ENCODE measurements at regions of chr18 and their contacts with region 1.

Region 1: GRCh38 chr18:47748847-47749599 is 181.4 kb downstream of the SMAD2 start:
- DNase-seq: peak; percentile 71 to 92 (median 80)
- ATAC-seq: peak; percentile 85 to 96 (median 90)
- H3K4me3 ChIP-seq: peak overlapping the region in 9 of 12 donors; percentile 34 to 54 (median 45)
- H3K27ac ChIP-seq: no peak overlapping the region
- H3K4me1 ChIP-seq: peaks cover 0 to 6% (median 0%) of the 10 kb centered on the region in 12 donors
- H3K27me3 ChIP-seq: peaks cover 0 to 17% (median 3%) of the 10 kb centered on the region in 9 donors
- CTCF ChIP-seq: peak; percentile 93 to 100 (median 100)
- POLR2A ChIP-seq: no peak

Region 2: GRCh38 chr18:47050468-47050867 is 698.6 kb before region 1 on chr18:
- intact Hi-C with region 1: loop called in 3 of 10 experiments (anchors 2 to 5 kb)
- DNase-seq: peak in 1 of 5 donors; percentile 23
- ATAC-seq: no peak
- H3K4me3 ChIP-seq: no peak overlapping the region
- H3K27ac ChIP-seq: no peak overlapping the region
- H3K4me1 ChIP-seq: peaks cover 0 to 3% (median 0%) of the 10 kb centered on the region in 12 donors
- H3K27me3 ChIP-seq: no peaks in the 10 kb centered on the region
- CTCF ChIP-seq: peak; percentile 37 to 71 (median 58)
- POLR2A ChIP-seq: no peak

Region 3: DNA sequence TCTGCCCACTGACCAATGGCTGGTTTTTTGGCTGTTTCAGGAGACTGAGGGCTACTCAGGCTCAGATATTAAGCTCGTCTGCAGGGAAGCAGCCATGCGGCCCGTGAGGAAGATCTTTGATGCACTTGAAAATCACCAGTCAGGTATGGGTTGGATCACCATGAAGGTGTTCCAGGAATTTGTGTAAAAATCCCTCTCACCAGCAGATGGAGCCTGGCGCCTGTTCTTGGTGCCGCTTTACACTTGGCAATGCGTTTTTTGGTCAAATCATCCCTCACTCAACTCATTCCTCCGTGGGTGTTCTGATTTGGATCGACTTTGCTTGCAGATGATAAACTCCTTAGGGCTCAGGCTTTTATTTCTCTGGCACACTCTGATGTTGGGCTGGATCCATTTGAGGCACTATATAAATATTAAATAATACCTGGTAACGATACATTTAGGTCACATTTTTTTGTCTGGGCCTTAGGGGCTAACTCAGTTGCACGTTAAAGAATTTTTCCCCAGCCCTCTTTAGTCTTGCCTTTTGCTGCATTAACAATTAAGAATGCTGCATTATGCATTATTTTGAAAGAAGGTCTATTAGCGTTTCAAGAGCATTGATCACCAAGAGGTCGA is 648.7 kb before region 1 on chr18:
- intact Hi-C with region 1: loop called (anchors 2 to 10 kb)
- DNase-seq: peak in 3 of 5 donors; percentile 20 to 31 (median 25)
- ATAC-seq: peak in 3 of 4 donors; percentile 47 to 79 (median 59)
- H3K4me3 ChIP-seq: no peak overlapping the region
- H3K27ac ChIP-seq: no peak overlapping the region
- H3K4me1 ChIP-seq: peaks cover 0 to 5% (median 0%) of the 10 kb centered on the region in 12 donors
- H3K27me3 ChIP-seq: no peaks in the 10 kb centered on the region
- CTCF ChIP-seq: peak; percentile 64 to 84 (median 72)
- POLR2A ChIP-seq: no peak

Region 4: DNA sequence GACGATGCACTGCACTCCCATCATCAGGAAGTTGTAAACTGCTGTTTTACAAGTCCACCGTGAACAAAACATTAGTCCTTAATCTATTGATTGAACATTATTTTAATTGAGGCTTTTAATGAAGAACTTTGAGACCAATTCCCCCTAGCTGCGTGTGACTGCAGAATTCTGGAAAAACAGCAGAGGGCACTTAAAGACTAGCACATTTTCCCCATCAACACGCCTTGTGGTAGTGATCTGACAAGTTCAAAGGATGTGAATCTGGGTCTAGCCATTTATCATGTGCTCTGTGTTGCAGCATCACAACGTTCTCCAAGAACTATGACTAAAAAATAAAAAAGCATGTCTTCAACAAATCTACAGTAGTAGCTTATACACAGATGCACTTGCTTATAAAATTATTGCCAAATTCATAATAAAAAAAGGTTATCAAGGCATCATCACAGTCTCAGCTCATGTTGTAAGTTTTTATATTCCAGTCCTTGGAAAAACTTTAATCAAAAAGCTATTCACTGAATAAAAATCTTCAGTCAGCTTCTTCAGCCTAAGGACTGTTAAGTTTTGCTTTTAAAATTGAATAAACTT is 533.4 kb before region 1 on chr18:
- intact Hi-C with region 1: loop called (anchors 1 to 2 kb)
- DNase-seq: no peak
- ATAC-seq: peak in 3 of 4 donors; percentile 51 to 63 (median 57)
- H3K4me3 ChIP-seq: no peak overlapping the region
- H3K27ac ChIP-seq: no peak overlapping the region
- H3K4me1 ChIP-seq: no peaks in the 10 kb centered on the region
- H3K27me3 ChIP-seq: peaks cover 0 to 73% (median 10%) of the 10 kb centered on the region in 9 donors
- CTCF ChIP-seq: peak in 11 of 12 donors; percentile 26 to 64 (median 54)
- POLR2A ChIP-seq: no peak

Region 5: GRCh38 chr18:47343291-47343690 is 405.7 kb before region 1 on chr18:
- intact Hi-C with region 1: loop called in 2 of 10 experiments (anchors 10 kb)
- DNase-seq: no peak
- ATAC-seq: no peak
- H3K4me3 ChIP-seq: no peak overlapping the region
- H3K27ac ChIP-seq: no peak overlapping the region
- H3K4me1 ChIP-seq: no peaks in the 10 kb centered on the region
- H3K27me3 ChIP-seq: no peaks in the 10 kb centered on the region
- CTCF ChIP-seq: no peak
- POLR2A ChIP-seq: no peak

Region 6: GRCh38 chr18:47595815-47596496 is 153.1 kb before region 1 on chr18:
- intact Hi-C with region 1: loop called in 1 of 10 experiments (anchors 2 kb)
- DNase-seq: no peak
- ATAC-seq: no peak
- H3K4me3 ChIP-seq: no peak overlapping the region
- H3K27ac ChIP-seq: no peak overlapping the region
- H3K4me1 ChIP-seq: no peaks in the 10 kb centered on the region
- H3K27me3 ChIP-seq: peaks cover 0 to 47% (median 14%) of the 10 kb centered on the region in 9 donors
- CTCF ChIP-seq: peak in 7 of 12 donors; percentile 6 to 32 (median 17)
- POLR2A ChIP-seq: no peak

Region 7: GRCh38 chr18:47606526-47606925 is 142.5 kb before region 1 on chr18:
- intact Hi-C with region 1: no loop called
- DNase-seq: no peak
- ATAC-seq: no peak
- H3K4me3 ChIP-seq: no peak overlapping the region
- H3K27ac ChIP-seq: no peak overlapping the region
- H3K4me1 ChIP-seq: no peaks in the 10 kb centered on the region
- H3K27me3 ChIP-seq: no peaks in the 10 kb centered on the region
- CTCF ChIP-seq: no peak
- POLR2A ChIP-seq: no peak

Region 8: DNA sequence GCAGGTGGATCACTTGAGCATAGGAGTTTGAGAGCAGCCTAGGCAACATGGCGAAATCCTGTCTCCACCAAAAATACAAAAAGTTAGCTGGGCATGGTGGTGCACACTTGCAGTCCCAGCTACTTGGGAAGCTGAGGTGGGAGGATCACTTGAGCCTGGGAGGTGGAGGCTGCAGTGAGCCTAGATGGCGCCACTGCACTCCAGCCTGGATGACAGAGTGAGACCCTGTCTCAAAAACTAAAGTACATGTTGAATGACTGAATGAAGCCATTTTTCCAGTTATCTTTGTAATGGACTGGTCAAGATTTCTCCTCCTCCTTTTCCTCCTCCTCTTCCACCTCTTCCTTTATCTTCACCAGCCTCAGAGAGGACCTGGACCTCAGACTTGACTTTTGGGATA is 90.5 kb before region 1 on chr18:
- intact Hi-C with region 1: no loop called
- DNase-seq: no peak
- ATAC-seq: no peak
- H3K4me3 ChIP-seq: no peak overlapping the region
- H3K27ac ChIP-seq: no peak overlapping the region
- H3K4me1 ChIP-seq: no peaks in the 10 kb centered on the region
- H3K27me3 ChIP-seq: no peaks in the 10 kb centered on the region
- CTCF ChIP-seq: no peak
- POLR2A ChIP-seq: no peak

Region 9: GRCh38 chr18:48922801-48923730 is 1174.0 kb after region 1 on chr18:
- intact Hi-C with region 1: no loop called
- DNase-seq: peak in 4 of 5 donors; percentile 60 to 78 (median 70)
- ATAC-seq: peak; percentile 55 to 71 (median 60)
- H3K4me3 ChIP-seq: peak overlapping the region; percentile 5 to 56 (median 39)
- H3K27ac ChIP-seq: peak overlapping the region; percentile 54 to 85 (median 72)
- H3K4me1 ChIP-seq: peaks cover 0 to 94% (median 69%) of the 10 kb centered on the region in 12 donors
- H3K27me3 ChIP-seq: no peaks in the 10 kb centered on the region
- CTCF ChIP-seq: no peak
- POLR2A ChIP-seq: peak in 1 of 2 donors; percentile 13

Measured in heart left ventricle (tissue), 16 donors.